Psoas muscle (tissue), 8 donors: ENCODE measurements at regions of chr1 and their contacts with region 1.

Region 1: GRCh38 chr1:27662707-27663393 is 9.1 kb downstream of the IFI6 start:
- DNase-seq: peak; percentile 80 to 85
- ATAC-seq: peak; percentile 61 to 71 (median 68)
- H3K4me3 ChIP-seq: no peak overlapping the region
- H3K27ac ChIP-seq: peak overlapping the region; percentile 34
- H3K4me1 ChIP-seq: peaks cover 8% of the 10 kb centered on the region
- H3K27me3 ChIP-seq: no peaks in the 10 kb centered on the region
- CTCF ChIP-seq: peak; percentile 94

Region 2: DNA sequence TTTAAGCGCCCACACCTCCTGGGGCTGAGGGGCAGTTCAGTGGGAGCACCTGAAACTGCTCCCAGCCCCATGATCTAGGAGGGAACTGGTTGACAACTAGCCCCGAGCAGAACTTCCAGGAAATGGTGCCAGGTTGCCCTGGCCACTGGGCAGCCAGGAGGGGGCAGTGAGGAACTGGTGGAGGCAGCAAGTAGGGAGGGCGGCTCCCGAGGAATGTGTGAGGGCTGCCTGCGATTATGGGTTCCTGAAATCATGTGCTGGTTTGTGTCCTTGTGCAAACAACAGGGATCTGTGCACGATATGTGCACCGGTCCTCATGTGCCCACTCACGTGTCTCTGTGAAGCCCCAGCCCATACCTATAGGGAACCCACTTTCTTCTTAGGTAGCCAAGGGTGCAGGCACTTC is 260.5 kb before region 1 on chr1:
- intact Hi-C with region 1: loop called in 1 of 2 experiments (anchors 5 kb)
- DNase-seq: peak; percentile 75 to 89
- ATAC-seq: peak; percentile 52 to 71 (median 59)
- H3K4me3 ChIP-seq: peak overlapping the region; percentile 45
- H3K27ac ChIP-seq: peak overlapping the region; percentile 85
- H3K4me1 ChIP-seq: peaks cover 50% of the 10 kb centered on the region
- H3K27me3 ChIP-seq: peaks cover 0 to 3% (median 0%) of the 10 kb centered on the region in 3 donors
- CTCF ChIP-seq: peak; percentile 56

Region 3: DNA sequence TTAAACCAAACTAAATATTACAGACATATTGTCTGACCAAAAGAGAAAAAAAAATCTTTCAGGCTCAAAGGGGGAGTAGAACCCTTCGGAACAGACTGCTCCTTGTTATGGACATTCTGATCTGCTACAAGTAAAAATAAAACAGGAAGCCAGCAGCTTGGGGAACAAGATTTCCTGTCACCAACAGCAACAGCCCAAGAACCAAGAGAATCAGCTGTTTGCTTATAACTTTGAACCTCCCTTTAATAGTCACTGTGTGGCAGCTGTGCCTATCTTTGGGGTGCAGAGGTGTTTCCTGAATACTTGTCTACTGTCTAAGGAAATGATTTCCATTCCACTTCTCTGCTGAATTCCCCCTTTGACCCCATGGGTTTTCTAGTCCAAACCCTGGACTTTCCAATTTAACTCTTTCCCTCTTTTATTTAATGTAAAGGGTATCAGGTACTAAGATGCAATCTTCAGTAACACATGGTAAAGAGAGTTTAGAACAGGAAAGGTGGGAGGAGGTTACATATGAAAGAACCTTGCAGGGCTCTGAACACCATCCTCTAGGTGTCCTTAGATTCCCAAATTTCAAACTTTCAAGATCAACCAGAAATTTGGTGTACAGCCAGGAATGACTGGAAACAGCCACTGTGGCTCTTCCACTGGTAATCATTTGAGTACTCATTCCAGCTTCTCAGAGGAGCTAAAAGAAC is 231.8 kb before region 1 on chr1:
- intact Hi-C with region 1: no loop called
- DNase-seq: no peak
- ATAC-seq: peak in 1 of 4 donors; percentile 35
- H3K4me3 ChIP-seq: no peak overlapping the region
- H3K27ac ChIP-seq: peak overlapping the region; percentile 79
- H3K4me1 ChIP-seq: peaks cover 83% of the 10 kb centered on the region
- H3K27me3 ChIP-seq: no peaks in the 10 kb centered on the region
- CTCF ChIP-seq: no peak

Region 4: DNA sequence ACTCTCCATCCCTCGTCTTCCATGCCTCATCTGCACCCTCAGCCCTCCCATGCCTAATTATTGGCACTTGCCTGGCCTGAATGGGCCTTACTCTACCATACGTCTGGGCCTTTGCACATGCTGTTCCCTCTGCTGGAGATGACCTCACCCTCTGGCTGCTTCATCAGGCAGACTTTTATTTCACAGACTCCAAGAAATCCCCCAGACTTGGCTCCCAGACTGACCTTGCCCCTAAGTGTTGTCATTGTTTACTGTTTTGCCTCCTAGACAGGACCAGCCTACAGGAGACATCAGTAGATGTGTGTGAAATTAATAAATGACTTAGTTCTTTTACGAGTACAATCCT is 53.7 kb before region 1 on chr1:
- intact Hi-C with region 1: loop called (anchors 1 to 2 kb)
- DNase-seq: no peak
- ATAC-seq: no peak
- H3K4me3 ChIP-seq: no peak overlapping the region
- H3K27ac ChIP-seq: no peak overlapping the region
- H3K4me1 ChIP-seq: no peaks in the 10 kb centered on the region
- H3K27me3 ChIP-seq: no peaks in the 10 kb centered on the region
- CTCF ChIP-seq: no peak